PC-3 (cell line): ENCODE measurements at regions of chr1 and their contacts with region 1.

Region 1: DNA sequence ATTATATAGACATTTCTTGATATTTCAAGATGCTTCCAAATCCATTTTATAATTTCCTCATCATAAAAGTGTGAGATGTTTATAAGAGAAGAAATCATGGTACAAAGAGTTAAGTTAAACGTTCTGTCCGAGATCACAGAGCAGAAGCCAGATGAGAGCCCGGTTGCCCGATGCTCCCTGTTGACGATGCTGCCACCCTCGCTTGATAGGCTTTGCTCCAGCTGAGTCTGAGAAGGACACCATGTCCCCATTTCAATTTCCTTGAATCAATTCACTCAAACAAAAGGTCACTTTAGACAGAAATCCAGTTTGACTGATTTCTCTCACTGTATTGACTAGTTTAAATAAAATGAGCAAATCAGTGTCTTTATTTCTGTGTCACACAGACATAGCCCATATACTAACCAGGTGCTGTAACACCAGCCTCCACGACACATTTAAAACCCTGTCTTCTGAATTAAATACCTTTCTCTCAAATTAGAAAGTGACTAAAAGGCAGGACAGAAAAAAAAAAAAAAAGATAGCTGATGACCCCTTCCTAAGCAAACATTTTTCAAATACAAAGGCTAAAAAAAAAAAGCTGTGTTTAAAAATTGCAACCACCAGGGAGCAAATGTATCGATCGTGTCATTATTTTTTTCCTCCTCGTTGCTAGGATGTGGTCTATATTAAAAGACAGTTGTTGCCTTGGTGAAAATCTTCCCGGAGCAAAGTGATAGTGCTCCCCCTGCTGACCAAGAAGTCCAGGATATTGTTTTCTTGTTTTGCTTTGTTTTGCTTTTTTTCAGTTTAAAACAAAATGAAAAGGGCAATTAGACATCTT is 35.2 kb downstream of the DNASE2B start:
- DNase-seq: peak; percentile 82
- ATAC-seq: peak; percentile 75
- H3K4me3 ChIP-seq: peak overlapping the region; percentile 57
- H3K27ac ChIP-seq: peak overlapping the region; percentile 38
- H3K4me1 ChIP-seq: peaks cover 22% of the 10 kb centered on the region
- H3K27me3 ChIP-seq: no peaks in the 10 kb centered on the region
- CTCF ChIP-seq: peak; percentile 91

Region 2: GRCh38 chr1:83931658-83932253 is 501.7 kb before region 1 on chr1:
- CTCF ChIA-PET with region 1: no interaction called
- POLR2A ChIA-PET with region 1: no interaction called
- intact Hi-C with region 1: loop called (anchors 2 kb)
- DNase-seq: peak; percentile 67
- ATAC-seq: peak; percentile 73
- H3K4me3 ChIP-seq: no peak overlapping the region
- H3K27ac ChIP-seq: no peak overlapping the region
- H3K4me1 ChIP-seq: no peaks in the 10 kb centered on the region
- H3K27me3 ChIP-seq: no peaks in the 10 kb centered on the region
- CTCF ChIP-seq: peak; percentile 87

Region 3: GRCh38 chr1:84271441-84272151 is 161.9 kb before region 1 on chr1:
- CTCF ChIA-PET with region 1: no interaction called
- POLR2A ChIA-PET with region 1: no interaction called
- intact Hi-C with region 1: loop called (anchors 5 kb)
- DNase-seq: peak; percentile 17
- ATAC-seq: peak; percentile 34
- H3K4me3 ChIP-seq: no peak overlapping the region
- H3K27ac ChIP-seq: peak overlapping the region; percentile 79
- H3K4me1 ChIP-seq: peaks cover 23% of the 10 kb centered on the region
- H3K27me3 ChIP-seq: no peaks in the 10 kb centered on the region
- CTCF ChIP-seq: no peak

Region 4: DNA sequence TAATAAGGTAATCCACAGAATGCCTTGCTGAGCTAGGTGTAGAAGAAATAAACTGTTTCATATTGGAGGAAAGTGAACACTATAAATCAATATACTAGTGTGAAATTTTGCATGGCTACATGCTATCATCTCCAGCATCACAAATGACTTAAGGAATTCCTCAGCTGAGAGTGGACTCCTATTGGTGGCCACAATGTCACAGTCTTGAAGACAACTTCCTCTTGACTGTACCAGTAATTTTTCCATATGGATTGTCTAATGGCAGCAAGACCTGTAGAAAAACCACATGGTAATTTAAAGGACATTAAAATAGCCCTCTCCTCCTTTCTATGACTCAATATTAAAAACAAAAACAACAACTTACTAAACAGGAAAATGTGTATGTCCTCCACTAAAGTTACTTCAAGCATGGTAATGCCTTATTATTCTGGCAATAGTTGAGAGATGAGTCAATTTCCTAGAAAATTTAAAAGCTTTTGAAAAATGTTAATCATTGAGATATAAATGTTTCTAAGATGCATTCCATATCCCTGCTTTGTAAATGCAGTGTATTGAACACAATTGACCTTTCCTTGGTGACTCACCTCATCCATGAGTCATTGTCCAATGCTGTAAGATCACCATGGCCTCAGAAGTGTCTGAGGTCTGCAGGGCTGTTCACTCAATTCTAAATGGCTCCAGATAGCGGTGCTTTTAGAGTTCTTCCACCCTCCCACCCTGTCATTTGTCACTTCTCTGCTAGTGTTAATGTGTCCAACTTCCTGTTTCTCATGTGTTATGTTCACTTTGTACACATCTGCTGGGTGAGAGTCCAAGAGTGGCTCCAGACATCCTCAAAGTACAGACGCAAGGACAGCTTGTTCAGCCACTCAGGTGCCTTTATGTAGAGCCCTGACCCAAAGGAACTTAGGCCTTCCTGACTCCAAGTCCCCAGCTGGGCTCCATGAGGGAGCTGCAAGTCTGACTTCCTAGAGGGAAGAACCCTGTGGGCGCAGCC is 67.9 kb before region 1 on chr1:
- CTCF ChIA-PET with region 1: no interaction called
- POLR2A ChIA-PET with region 1: no interaction called
- intact Hi-C with region 1: loop called (anchors 2 kb)
- DNase-seq: peak; percentile 99
- ATAC-seq: peak; percentile 94
- H3K4me3 ChIP-seq: no peak overlapping the region
- H3K27ac ChIP-seq: peak overlapping the region; percentile 70
- H3K4me1 ChIP-seq: peaks cover 36% of the 10 kb centered on the region
- H3K27me3 ChIP-seq: no peaks in the 10 kb centered on the region
- CTCF ChIP-seq: no peak

Region 5: GRCh38 chr1:84387480-84388163 is 45.8 kb before region 1 on chr1:
- CTCF ChIA-PET with region 1: no interaction called
- POLR2A ChIA-PET with region 1: no interaction called
- intact Hi-C with region 1: no loop called
- DNase-seq: peak; percentile 22
- ATAC-seq: peak; percentile 43; the same call in 1 of the 2 replicates
- H3K4me3 ChIP-seq: no peak overlapping the region
- H3K27ac ChIP-seq: no peak overlapping the region
- H3K4me1 ChIP-seq: peaks cover 7% of the 10 kb centered on the region
- H3K27me3 ChIP-seq: no peaks in the 10 kb centered on the region
- CTCF ChIP-seq: peak; percentile 47

Region 6: DNA sequence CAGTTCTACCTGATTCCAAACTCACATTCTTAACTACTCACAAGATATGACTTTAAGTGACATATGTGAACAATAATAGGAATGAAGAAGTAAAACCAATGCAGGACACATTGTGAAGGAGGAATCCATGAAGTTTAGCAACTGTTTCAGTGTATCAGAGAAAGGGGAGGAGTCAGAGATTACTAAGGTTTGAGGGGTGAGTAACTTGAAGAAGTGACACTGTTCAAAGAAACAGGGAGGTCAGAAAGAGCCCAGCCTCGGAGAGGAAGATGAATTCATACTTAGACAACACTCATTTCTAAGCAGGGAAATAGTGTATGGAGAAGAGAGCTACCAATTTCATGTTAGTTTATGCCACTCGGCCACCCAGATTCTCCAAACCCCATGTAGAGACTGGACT is 17.4 kb after region 1 on chr1:
- CTCF ChIA-PET with region 1: no interaction called
- POLR2A ChIA-PET with region 1: no interaction called
- intact Hi-C with region 1: no loop called
- DNase-seq: peak; percentile 18
- ATAC-seq: 0 out of 2 replicates have a peak, but pooled peaks have one; percentile 15
- H3K4me3 ChIP-seq: no peak overlapping the region
- H3K27ac ChIP-seq: no peak overlapping the region
- H3K4me1 ChIP-seq: no peaks in the 10 kb centered on the region
- H3K27me3 ChIP-seq: no peaks in the 10 kb centered on the region
- CTCF ChIP-seq: no peak

Region 7: GRCh38 chr1:84467298-84467697 is 33.8 kb after region 1 on chr1:
- CTCF ChIA-PET with region 1: no interaction called
- POLR2A ChIA-PET with region 1: no interaction called
- intact Hi-C with region 1: no loop called
- DNase-seq: peak; percentile 17
- ATAC-seq: peak; percentile 38; the same call in 1 of the 2 replicates
- H3K4me3 ChIP-seq: no peak overlapping the region
- H3K27ac ChIP-seq: no peak overlapping the region
- H3K4me1 ChIP-seq: no peaks in the 10 kb centered on the region
- H3K27me3 ChIP-seq: no peaks in the 10 kb centered on the region
- CTCF ChIP-seq: no peak